Ascending aorta (tissue), 2 donors: ENCODE measurements at regions of chr11 and their contacts with region 1.

Region 1: GRCh38 chr11:72722050-72722748 is 30.0 kb downstream of the ARAP1 start:
- DNase-seq: peak; percentile 80 to 92
- H3K4me3 ChIP-seq: peak overlapping the region; percentile 68 to 76
- H3K27ac ChIP-seq: peak overlapping the region; percentile 40 to 90
- H3K4me1 ChIP-seq: peaks cover 13 to 32% of the 10 kb centered on the region in 2 donors
- H3K27me3 ChIP-seq: no peaks in the 10 kb centered on the region
- CTCF ChIP-seq: peak in 1 of 3 experiments; percentile 13

Region 2: DNA sequence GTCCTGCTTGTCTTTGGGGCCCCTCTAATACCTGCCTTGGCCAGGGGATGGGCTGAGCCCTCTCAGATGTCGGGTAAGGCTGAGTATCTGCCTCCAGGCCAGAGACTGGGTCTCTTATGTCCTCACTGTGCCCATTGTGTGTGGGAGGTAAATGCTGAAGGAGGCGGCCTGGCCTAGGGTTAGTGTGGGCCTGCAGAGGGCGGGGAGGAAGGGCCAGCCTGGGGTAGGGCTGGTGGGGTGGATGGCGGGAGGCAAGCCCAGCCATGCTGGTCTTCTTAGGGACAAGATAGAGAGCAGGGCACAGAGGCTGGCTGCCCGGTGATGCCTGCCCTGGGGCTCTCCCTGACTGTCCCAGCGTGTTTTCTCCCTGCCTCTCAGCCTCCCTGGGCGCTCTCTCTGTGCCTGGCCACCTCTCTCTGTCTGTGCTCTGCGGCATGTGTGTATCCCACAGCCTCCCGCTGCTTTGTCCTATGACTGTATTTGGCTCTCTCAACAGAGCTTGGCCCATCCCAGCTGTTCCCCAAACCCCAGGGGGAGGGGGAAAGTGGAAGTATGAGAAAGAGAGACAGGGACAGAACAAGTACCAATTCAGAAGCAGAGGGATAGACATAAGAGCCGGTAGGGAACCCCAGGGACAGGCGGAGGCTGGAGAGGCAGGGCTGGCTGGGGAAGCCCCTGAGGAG is 105.0 kb before region 1 on chr11:
- intact Hi-C with region 1: no loop called
- DNase-seq: no peak
- H3K4me3 ChIP-seq: no peak overlapping the region
- H3K27ac ChIP-seq: no peak overlapping the region
- H3K4me1 ChIP-seq: no peaks in the 10 kb centered on the region
- H3K27me3 ChIP-seq: no peaks in the 10 kb centered on the region
- CTCF ChIP-seq: no peak

Region 3: DNA sequence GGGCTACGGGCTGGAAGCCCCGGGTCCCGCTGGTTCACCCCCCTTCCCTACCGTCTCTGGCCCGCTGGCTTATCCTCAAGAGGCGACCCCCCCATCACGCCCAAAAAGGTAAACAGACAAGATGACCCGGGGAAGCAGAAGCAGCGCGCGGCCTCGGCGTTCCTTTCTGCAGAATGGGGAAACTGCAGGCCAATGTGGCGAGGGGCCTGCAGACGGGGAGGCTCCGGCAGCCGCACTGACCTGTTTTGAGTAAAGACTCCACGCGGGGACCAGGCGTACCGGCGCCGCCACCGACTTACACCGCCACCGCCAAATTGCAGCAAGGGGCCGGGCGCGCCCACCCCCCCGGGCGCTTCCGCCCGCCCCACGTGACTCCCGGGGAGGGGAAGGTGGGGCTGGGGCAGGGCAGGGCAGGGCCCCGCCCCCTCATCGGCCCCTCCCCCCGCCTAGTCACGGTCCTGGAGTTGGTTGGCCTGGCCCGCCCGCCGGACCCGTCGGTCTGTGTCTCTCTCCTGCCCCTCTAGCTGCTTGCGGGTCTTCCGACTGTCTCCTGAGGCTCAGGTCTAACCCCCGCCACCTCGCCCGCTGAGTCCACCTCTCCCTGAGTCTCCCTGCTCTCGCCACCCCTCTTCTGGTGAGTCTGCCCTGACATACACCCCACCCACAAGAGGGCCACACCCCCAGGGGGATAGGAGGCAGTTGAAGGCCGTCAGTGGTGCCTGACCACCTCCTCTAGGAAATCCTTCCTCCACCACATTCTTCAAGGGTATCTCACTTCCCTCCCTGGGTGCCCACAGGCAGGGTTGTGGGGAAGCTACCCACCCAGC is 30.1 kb after region 1 on chr11 and contains the start of gene ARAP1:
- intact Hi-C with region 1: loop called (anchors 2 kb)
- DNase-seq: peak in 1 of 2 donors; percentile 86
- H3K4me3 ChIP-seq: peak within 1 kb of the TSS; percentile 68 to 72
- H3K27ac ChIP-seq: peak within 1 kb of the TSS; percentile 34 to 43
- H3K4me1 ChIP-seq: peaks cover 6 to 15% of the 10 kb centered on the region in 2 donors
- H3K27me3 ChIP-seq: no peaks in the 10 kb centered on the region
- CTCF ChIP-seq: no peak
- total RNA-seq, gene ARAP1: 238 TPM

Region 4: GRCh38 chr11:72793425-72794367 is 71.5 kb after region 1 on chr11 and contains the start of gene STARD10:
- intact Hi-C with region 1: loop called (anchors 1 kb)
- DNase-seq: peak; percentile 86 to 97
- H3K4me3 ChIP-seq: peak within 1 kb of the TSS; percentile 64 to 67
- H3K27ac ChIP-seq: peak within 1 kb of the TSS; percentile 86
- H3K4me1 ChIP-seq: peaks cover 14 to 25% of the 10 kb centered on the region in 2 donors
- H3K27me3 ChIP-seq: no peaks in the 10 kb centered on the region
- CTCF ChIP-seq: peak; percentile 92 to 100 (median 97)
- total RNA-seq, gene STARD10: 20.9 TPM

Region 5: DNA sequence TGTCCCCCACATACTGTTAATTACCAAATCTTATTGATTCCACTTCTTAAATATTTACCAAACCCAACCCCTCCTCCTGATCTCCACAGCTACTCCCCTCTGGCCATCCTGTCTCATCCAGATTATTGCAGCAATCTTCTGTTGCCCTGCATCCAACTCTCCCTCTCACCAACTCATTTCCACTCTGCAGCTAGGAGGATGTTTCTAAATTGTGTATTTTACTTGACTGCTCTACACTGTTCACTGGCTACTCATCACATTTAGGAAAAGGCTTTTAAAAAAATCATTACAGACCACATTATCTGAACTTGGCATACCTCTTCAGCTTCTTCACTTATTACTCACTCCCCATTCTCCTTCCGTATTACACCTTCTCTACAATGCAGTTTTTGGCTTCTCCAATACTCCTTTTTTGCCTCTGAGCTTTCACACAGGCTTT is 210.0 kb after region 1 on chr11:
- intact Hi-C with region 1: no loop called
- DNase-seq: no peak
- H3K4me3 ChIP-seq: no peak overlapping the region
- H3K27ac ChIP-seq: no peak overlapping the region
- H3K4me1 ChIP-seq: peaks cover 0 to 10% of the 10 kb centered on the region in 2 donors
- H3K27me3 ChIP-seq: no peaks in the 10 kb centered on the region
- CTCF ChIP-seq: no peak

Region 6: DNA sequence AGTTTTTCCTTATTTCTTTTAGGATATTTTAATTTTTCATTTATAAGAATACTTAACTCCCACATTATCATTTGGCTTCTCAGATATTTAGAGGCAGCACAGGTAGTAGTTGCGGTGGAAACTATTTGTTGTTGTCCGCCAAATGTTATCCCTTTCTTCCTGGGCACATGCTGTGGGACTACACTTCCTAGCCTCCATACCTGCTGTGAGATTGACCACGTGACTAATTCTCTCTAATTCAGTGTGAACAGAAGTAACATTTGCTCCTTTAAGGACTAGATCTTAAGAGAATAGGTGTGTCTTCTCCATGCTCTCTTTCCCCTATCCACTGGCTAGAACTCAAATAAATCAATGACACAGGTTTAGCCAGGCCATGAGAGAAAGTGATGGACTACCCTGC is 228.5 kb after region 1 on chr11:
- intact Hi-C with region 1: no loop called
- DNase-seq: no peak
- H3K4me3 ChIP-seq: no peak overlapping the region
- H3K27ac ChIP-seq: no peak overlapping the region
- H3K4me1 ChIP-seq: no peaks in the 10 kb centered on the region
- H3K27me3 ChIP-seq: no peaks in the 10 kb centered on the region
- CTCF ChIP-seq: no peak

Region 7: DNA sequence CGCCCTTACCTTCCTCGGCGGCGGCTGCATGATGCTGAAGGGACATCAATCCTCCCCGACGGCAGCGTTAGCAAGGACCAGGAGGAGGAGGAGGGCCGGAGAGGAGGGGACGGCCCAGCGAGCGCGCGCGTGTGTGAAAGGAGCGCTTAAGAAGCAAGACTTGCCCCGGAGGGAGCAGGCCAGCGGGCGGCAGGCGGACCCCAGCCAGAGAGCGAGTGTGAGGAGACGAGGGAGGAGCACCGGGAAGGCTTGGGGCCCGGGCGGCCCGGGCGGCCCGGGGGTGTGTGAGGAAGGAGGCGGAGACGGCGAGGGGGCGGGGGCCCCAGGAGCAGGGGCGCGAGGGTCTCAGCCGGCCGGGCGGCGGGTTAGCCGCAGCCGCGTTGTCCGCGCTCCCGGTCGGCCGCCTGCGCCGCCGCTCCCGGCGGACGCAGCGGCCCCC is 419.7 kb after region 1 on chr11:
- intact Hi-C with region 1: loop called (anchors 10 kb)
- DNase-seq: peak; percentile 26 to 86
- H3K4me3 ChIP-seq: peak overlapping the region; percentile 98 to 99
- H3K27ac ChIP-seq: peak overlapping the region; percentile 99 to 100
- H3K4me1 ChIP-seq: peaks cover 8 to 23% of the 10 kb centered on the region in 2 donors
- H3K27me3 ChIP-seq: no peaks in the 10 kb centered on the region
- CTCF ChIP-seq: no peak

Region 8: DNA sequence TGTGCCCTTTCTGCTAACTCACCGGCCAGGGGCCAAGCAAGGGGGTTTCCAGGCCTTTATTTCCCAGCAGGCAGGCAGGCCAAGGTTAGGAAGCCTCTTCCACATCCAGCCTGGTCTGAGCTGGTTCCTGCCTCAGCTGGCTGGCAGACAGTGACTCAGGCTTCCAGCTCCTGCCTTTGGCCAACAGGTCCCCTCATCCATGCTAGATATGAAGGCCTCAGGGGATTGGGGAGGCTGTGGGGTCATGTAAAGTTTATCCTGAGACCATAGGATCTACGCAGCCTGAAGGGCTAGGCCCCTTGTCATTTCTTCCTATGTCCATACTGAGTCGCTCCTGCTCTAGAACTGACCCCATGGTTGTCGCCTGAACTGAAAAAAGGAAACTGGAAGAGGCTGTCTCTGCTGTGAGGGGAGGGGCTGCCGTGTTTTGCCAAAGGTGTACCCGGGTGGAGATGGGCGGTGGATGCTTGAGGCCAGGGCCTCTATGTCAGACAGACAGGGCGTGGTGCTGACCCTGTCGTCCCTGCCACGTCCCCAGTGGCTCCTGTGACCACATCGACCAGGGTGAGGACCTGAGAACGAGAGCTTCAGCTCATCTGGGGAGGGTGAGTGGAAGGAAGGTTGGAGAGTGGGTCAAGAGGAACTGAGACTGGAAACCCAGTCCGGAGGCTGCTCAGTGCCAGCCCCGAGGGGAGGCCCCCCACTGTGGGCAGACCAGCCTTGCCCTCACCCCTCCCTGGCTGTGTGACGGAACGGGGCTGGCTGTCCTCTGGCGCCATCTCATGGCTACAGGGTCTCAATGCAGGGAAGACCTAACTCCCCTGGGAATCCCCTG is 566.9 kb after region 1 on chr11:
- intact Hi-C with region 1: loop called (anchors 5 kb)
- DNase-seq: peak; percentile 56 to 88
- H3K4me3 ChIP-seq: peak overlapping the region in 1 of 2 donors; percentile 34
- H3K27ac ChIP-seq: peak overlapping the region; percentile 78 to 79
- H3K4me1 ChIP-seq: peaks cover 0 to 15% of the 10 kb centered on the region in 2 donors
- H3K27me3 ChIP-seq: no peaks in the 10 kb centered on the region
- CTCF ChIP-seq: peak; percentile 95 to 99 (median 97)